ENCODE measurements at regions of chr17 and their contacts with region 1.

Region 1: DNA sequence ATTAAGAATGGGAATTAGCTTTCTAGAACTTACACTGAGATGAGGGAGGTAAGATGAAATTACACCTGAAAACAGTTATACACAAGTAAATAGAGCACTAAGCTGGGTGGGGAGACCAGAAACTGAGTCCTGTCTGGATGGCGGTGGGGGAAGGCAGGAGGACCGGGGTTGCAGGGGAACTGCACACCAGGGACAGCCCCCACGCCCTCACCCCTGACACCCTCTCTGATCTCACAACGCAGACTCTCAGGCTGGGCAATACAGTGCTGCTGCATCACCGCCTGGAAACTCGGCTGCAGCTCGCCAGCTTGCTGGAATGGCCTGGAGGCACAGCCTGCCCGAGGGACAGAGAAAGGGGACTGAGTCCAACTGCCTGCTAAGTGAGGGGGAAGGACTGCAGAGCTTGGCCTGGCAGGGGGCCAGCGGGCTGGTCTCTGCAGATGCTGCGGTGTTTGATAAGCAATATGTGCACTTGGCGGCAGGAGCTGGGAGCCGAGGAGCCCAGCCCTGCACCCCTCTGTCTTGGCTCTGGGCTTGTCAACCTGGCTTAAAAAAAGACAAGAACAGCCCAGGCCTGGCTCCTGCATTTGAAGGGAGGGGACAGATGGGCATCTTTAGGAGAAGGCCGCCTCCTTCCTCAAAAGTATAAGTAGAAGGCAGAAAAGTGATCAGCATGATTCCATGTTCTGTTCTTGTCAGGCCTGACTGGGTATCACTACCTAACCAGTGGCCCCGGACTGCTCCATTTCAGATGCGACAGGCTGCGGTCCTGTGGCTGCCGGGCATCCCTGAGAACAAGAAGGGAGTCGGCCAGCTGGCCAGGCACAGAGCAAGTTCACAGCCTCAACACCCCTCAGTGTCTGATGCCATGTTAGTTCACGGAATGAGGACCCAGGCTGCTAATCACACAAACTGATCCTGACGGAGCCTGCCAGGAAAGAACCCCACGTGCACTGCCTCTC is 30.2 kb downstream of the SPHK1 start:
- DNase-seq: peak; percentile 82 to 92 (median 91)
- ATAC-seq: peak; percentile 81 to 91 (median 88)
- H3K4me3 ChIP-seq: no peak overlapping the region
- H3K27ac ChIP-seq: peak overlapping the region in 10 of 12 donors; percentile 9 to 69 (median 52)
- H3K4me1 ChIP-seq: peaks cover 0 to 86% (median 52%) of the 10 kb centered on the region in 12 donors
- H3K27me3 ChIP-seq: no peaks in the 10 kb centered on the region
- CTCF ChIP-seq: no peak
- POLR2A ChIP-seq: no peak

Region 2: DNA sequence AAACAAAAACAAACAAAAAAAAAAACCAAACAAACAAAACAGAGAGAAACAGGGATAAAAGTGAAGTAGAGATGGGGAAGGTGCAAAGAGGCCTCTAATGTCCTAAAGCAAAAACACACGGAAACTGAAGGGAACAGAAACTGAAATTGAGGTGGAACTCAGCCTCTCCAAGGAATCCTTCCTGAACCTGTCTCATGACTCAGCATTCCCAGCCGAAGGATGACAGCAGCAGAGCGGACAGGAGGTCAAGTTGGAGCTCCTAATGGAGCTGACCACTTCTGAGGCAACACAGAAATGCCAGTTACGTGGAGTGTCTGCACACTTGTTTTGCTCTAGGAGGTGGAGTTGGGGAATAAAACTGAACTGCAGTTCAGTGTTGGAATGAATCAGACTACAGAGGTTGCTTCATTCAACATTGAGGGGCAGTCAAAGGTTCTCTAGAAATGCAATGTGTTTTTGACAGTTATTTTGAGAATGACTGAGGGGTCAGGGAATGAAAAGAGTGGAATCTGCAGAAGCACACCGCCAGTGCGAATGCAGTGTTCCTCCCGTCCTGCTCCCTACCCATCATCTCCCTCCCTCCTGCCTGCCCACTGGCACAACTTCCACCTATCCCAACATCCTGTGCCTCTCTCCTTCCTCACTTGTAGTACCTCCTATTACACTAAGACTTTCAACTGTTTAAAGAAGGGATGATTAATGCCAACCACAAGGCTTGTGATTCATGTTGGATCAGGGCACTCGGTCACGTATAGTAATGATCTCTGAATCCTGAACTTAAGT is 32.0 kb after region 1 on chr17:
- intact Hi-C with region 1: loop called in 3 of 10 experiments (anchors 2 to 5 kb)
- DNase-seq: no peak
- ATAC-seq: peak in 3 of 4 donors; percentile 5 to 27 (median 27)
- H3K4me3 ChIP-seq: no peak overlapping the region
- H3K27ac ChIP-seq: peak overlapping the region in 11 of 12 donors; percentile 17 to 90 (median 79)
- H3K4me1 ChIP-seq: peaks cover 11 to 79% (median 53%) of the 10 kb centered on the region in 12 donors
- H3K27me3 ChIP-seq: no peaks in the 10 kb centered on the region
- CTCF ChIP-seq: no peak
- POLR2A ChIP-seq: no peak

Region 3: GRCh38 chr17:76452660-76453430 is 38.2 kb after region 1 on chr17 and contains the start of gene UBE2O:
- intact Hi-C with region 1: loop called in 9 of 10 experiments (anchors 2 to 5 kb)
- DNase-seq: peak; percentile 88 to 95 (median 92)
- ATAC-seq: peak; percentile 72 to 96 (median 94)
- H3K4me3 ChIP-seq: peak within 1 kb of the TSS; percentile 74 to 100 (median 94)
- H3K27ac ChIP-seq: peak within 1 kb of the TSS; percentile 74 to 98 (median 88)
- H3K4me1 ChIP-seq: peaks cover 6 to 37% (median 22%) of the 10 kb centered on the region in 12 donors
- H3K27me3 ChIP-seq: no peaks in the 10 kb centered on the region
- CTCF ChIP-seq: peak in 10 of 12 donors; percentile 21 to 66 (median 42)
- POLR2A ChIP-seq: peak in 1 of 2 donors; percentile 90
- total RNA-seq, gene UBE2O: 23.0 to 36.1 (median 31.8) TPM

Region 4: DNA sequence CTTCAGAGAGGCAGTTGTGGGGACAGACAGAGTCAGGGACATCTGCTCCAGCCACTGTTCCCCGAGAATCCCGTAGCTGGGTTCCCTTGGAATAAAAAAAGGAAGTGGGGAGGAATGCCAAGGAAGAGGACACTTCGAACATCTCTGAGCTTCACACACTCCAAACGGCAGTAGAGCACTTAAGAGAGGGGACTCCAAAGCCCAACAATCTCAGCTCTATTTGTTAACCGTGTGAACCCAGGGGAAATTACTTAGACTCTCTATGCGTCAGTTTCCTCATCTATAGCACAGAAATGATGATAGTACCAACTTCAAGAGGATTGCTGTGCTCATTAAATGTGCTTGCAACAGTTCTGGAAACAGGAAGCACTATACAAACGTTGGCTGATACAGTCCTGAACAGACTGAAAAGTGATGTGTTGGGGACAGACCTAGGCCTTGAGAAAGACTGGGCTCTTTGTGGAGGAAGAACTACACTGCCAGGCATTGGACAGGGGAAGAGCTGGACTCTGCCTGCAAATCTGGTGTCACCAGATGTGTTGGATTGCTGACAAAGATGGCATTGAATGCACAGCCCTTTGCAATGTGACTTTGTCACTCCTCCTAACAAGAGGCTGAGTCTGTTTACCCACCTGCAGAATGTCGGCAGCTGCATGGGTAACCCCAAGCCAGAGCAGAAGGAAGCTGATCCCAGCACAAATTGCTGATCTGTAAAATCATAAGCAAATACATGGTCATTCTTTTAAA is 183.3 kb after region 1 on chr17:
- intact Hi-C with region 1: no loop called
- DNase-seq: no peak
- ATAC-seq: peak in 2 of 4 donors; percentile 35 to 70
- H3K4me3 ChIP-seq: no peak overlapping the region
- H3K27ac ChIP-seq: no peak overlapping the region
- H3K4me1 ChIP-seq: peaks cover 0 to 35% (median 4%) of the 10 kb centered on the region in 12 donors
- H3K27me3 ChIP-seq: no peaks in the 10 kb centered on the region
- CTCF ChIP-seq: no peak
- POLR2A ChIP-seq: no peak